ENCODE measurements at regions of chr22 and their contacts with region 1.

Region 1: GRCh38 chr22:28955817-28956216 is 72.4 kb downstream of the ZNRF3 start:
- DNase-seq: peak; percentile 80 to 84
- ATAC-seq: peak; percentile 89 to 96 (median 91)
- H3K4me3 ChIP-seq: no peak overlapping the region
- H3K4me3 Mint-ChIP-seq: peak overlapping the region; percentile 65
- H3K27ac ChIP-seq: no peak overlapping the region
- H3K27ac Mint-ChIP-seq: peak overlapping the region; percentile 8 to 68
- H3K4me1 ChIP-seq: peaks cover 18% of the 10 kb centered on the region
- H3K4me1 Mint-ChIP-seq: peaks cover 24 to 34% of the 10 kb centered on the region in 2 donors
- H3K27me3 ChIP-seq: peaks cover 68% of the 10 kb centered on the region
- H3K27me3 Mint-ChIP-seq: peaks cover 68 to 83% of the 10 kb centered on the region in 2 donors
- CTCF ChIP-seq: no peak

Region 2: GRCh38 chr22:28674121-28674563 is 281.7 kb before region 1 on chr22:
- intact Hi-C with region 1: loop called (anchors 5 kb)
- DNase-seq: peak in 1 of 2 donors; percentile 83
- ATAC-seq: peak; percentile 80 to 98 (median 91)
- H3K4me3 ChIP-seq: no peak overlapping the region
- H3K4me3 Mint-ChIP-seq: peak overlapping the region; percentile 92
- H3K27ac ChIP-seq: no peak overlapping the region
- H3K27ac Mint-ChIP-seq: peak overlapping the region; percentile 96 to 97
- H3K4me1 ChIP-seq: peaks cover 15% of the 10 kb centered on the region
- H3K4me1 Mint-ChIP-seq: peaks cover 26 to 28% of the 10 kb centered on the region in 2 donors
- H3K27me3 ChIP-seq: peaks cover 55% of the 10 kb centered on the region
- H3K27me3 Mint-ChIP-seq: peaks cover 41 to 60% of the 10 kb centered on the region in 2 donors
- CTCF ChIP-seq: no peak

Region 3: GRCh38 chr22:28882878-28883656 is 72.8 kb before region 1 on chr22 and contains the start of gene ZNRF3:
- intact Hi-C with region 1: loop called (anchors 5 kb)
- DNase-seq: peak; percentile 87 to 95
- ATAC-seq: peak; percentile 89 to 99 (median 92)
- H3K4me3 ChIP-seq: peak within 1 kb of the TSS; percentile 38
- H3K4me3 Mint-ChIP-seq: peak within 1 kb of the TSS; percentile 95
- H3K27ac ChIP-seq: no peak within 1 kb of the TSS
- H3K27ac Mint-ChIP-seq: peak within 1 kb of the TSS; percentile 22 to 78
- H3K4me1 ChIP-seq: peaks cover 16% of the 10 kb centered on the region
- H3K4me1 Mint-ChIP-seq: peaks cover 18 to 22% of the 10 kb centered on the region in 2 donors
- H3K27me3 ChIP-seq: peaks cover 21% of the 10 kb centered on the region
- H3K27me3 Mint-ChIP-seq: peaks cover 17 to 22% of the 10 kb centered on the region in 2 donors
- CTCF ChIP-seq: no peak
- total RNA-seq, gene ZNRF3: 0.23 to 0.34 (median 0.33) TPM

Region 4: DNA sequence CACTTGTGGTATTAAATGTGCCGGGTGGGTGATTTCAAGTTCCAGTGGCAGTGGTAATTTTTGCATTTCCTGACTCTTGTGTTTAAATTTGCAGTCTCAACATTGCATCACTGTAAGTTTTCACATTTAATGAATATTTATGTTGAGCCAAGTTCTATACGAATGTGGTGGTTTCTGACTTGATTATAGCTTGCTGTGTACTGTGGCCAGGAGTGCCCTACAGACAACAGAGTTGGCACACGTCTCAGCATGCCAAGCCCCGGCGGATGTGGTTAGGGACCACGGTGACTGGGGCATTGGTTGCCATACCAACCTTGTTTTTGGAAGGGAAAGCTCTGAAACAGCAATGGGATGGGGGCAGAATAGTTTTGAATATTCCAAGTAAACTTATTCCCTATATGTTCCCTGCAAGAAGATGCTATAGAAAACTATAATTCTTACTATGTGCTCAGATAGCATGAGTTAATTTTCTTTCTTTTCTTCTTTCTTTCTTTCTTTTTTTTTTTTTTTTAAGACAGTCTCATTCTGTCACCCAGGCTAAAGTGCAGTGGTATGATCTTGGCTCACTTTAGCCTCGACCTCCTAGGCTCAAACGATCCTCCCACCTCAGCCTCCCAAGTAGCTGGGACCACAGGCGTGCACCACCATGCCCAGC is 56.5 kb before region 1 on chr22:
- intact Hi-C with region 1: loop called (anchors 5 kb)
- DNase-seq: peak; percentile 36 to 65
- ATAC-seq: peak; percentile 75 to 94 (median 85)
- H3K4me3 ChIP-seq: no peak overlapping the region
- H3K4me3 Mint-ChIP-seq: peak overlapping the region; percentile 17
- H3K27ac ChIP-seq: no peak overlapping the region
- H3K27ac Mint-ChIP-seq: peak overlapping the region in 1 of 2 donors; percentile 38
- H3K4me1 ChIP-seq: peaks cover 5% of the 10 kb centered on the region
- H3K4me1 Mint-ChIP-seq: peaks cover 10 to 16% of the 10 kb centered on the region in 2 donors
- H3K27me3 ChIP-seq: no peaks in the 10 kb centered on the region
- H3K27me3 Mint-ChIP-seq: peaks cover 10 to 16% of the 10 kb centered on the region in 2 donors
- CTCF ChIP-seq: no peak

Region 5: DNA sequence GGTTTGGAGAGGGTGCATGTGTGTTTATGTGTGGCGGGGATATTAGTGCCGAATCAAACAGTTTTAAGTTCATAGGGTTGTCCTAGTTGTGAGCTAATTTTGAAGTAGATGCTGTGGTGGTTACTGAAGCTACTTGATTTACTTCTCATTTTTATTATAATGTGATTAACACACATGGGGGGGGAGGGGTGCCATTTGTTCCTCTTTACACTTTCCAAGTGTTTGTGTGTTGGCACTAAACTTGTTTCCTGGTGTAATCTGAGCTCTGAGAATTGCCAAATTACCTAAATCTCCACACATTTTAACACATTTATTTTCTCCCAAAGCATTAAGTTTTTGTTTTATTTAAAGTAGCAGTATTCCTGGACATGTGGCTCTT is 12.3 kb before region 1 on chr22:
- intact Hi-C with region 1: no loop called
- DNase-seq: no peak
- ATAC-seq: no peak
- H3K4me3 ChIP-seq: no peak overlapping the region
- H3K4me3 Mint-ChIP-seq: no peak overlapping the region
- H3K27ac ChIP-seq: no peak overlapping the region
- H3K27ac Mint-ChIP-seq: no peak overlapping the region
- H3K4me1 ChIP-seq: no peaks in the 10 kb centered on the region
- H3K4me1 Mint-ChIP-seq: no peaks in the 10 kb centered on the region
- H3K27me3 ChIP-seq: no peaks in the 10 kb centered on the region
- H3K27me3 Mint-ChIP-seq: peaks cover 51 to 64% of the 10 kb centered on the region in 2 donors
- CTCF ChIP-seq: no peak

Region 6: DNA sequence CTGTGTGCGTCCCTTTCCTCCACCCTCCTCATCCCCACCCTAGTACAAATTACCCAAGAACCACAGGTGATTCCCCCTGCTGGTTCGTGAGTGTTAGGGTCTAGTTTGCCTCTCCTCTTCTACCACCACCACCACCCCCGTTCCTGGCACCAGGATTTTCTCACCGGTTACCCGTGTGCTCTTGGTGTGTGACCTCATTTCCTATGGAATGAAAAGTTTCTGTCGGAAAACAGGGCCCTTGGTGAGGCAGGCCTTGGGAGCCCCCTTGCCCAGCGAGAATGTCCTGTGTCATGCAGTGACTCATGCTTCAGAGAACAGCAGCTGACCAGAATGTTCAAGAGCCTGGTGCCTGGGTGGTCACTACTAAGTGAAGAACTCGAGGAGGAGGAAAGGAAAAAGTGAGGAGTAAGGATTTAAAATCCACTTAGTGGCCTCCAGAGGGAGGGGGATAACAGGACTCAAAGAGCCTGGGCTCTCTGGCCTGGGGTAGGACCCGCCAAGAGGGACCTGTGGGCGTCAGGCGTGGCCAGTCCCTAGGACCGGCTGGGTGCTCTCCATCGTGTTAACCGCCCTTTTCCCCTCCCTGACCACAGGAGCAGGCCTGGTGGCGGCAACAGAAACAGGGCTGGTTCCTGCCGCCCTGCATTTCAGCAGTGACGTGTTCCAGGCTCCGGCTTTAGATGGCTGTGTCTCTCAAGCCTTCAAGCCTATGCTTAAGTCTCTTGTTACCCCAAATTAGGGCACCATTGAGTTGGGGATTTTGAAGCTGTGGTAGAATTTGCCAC is 75.6 kb after region 1 on chr22:
- intact Hi-C with region 1: loop called (anchors 5 kb)
- DNase-seq: peak; percentile 9 to 39
- ATAC-seq: peak; percentile 52 to 84 (median 75)
- H3K4me3 ChIP-seq: no peak overlapping the region
- H3K4me3 Mint-ChIP-seq: peak overlapping the region; percentile 72
- H3K27ac ChIP-seq: no peak overlapping the region
- H3K27ac Mint-ChIP-seq: peak overlapping the region in 1 of 2 donors; percentile 73
- H3K4me1 ChIP-seq: peaks cover 25% of the 10 kb centered on the region
- H3K4me1 Mint-ChIP-seq: peaks cover 20 to 26% of the 10 kb centered on the region in 2 donors
- H3K27me3 ChIP-seq: peaks cover 33% of the 10 kb centered on the region
- H3K27me3 Mint-ChIP-seq: peaks cover 51 to 71% of the 10 kb centered on the region in 2 donors
- CTCF ChIP-seq: no peak

Region 7: GRCh38 chr22:29291215-29291614 is 335.4 kb after region 1 on chr22:
- intact Hi-C with region 1: no loop called
- DNase-seq: no peak
- ATAC-seq: peak in 1 of 3 donors; percentile 15
- H3K4me3 ChIP-seq: no peak overlapping the region
- H3K4me3 Mint-ChIP-seq: no peak overlapping the region
- H3K27ac ChIP-seq: no peak overlapping the region
- H3K27ac Mint-ChIP-seq: no peak overlapping the region
- H3K4me1 ChIP-seq: no peaks in the 10 kb centered on the region
- H3K4me1 Mint-ChIP-seq: peaks cover 32 to 34% of the 10 kb centered on the region in 2 donors
- H3K27me3 ChIP-seq: no peaks in the 10 kb centered on the region
- H3K27me3 Mint-ChIP-seq: no peaks in the 10 kb centered on the region
- CTCF ChIP-seq: no peak

Measured in natural killer cell (primary cell).